AG04450 (cell line): ENCODE measurements at regions of chr3 and their contacts with region 1.

Region 1: DNA sequence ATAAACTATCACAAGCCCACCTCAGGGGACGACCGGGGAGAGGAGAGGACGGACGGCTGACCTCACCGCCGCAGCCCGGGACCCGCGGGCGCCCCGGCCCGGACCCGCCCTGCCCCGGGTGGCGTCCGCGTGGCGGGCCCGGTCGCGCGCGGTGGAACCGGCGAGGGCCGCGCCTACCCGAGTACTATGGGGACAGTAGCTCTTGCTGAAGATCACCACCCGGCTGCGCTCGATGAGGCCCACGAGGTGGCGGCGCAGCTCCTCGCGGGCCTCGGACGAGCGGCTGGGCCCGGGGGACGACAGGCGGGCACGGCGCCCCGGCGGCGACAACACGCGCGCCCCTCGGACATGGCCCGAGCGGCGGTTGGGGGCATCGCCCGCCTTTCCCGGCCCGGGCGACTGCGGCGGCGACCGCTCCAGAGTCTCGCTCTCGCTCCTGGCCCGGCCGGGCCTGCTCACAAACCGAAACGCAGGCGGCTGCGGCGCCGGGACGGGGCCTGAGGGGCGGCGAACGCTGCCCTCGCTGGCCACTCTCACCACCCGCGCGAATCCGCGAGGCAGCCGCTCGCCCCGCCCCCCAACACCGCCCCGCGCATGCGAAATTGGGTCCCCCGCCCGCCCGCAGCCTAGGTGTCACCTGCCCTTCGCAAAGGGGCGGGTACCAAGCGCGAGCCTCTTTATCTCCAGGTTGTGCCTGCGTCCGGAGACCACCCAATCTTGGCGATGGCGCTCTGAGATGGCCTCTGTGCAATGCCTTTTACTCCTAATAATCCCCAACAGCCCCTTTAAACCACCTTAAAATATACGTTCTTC is at the start of gene TXNRD3:
- DNase-seq: no peak
- H3K4me3 ChIP-seq: peak within 1 kb of the TSS; percentile 70
- H3K27ac ChIP-seq: no peak within 1 kb of the TSS
- H3K27me3 ChIP-seq: peaks cover 7% of the 10 kb centered on the region
- CTCF ChIP-seq: no peak
- polyA plus RNA-seq, gene TXNRD3: 7.4 and 10.1 TPM in 2 replicates

Region 2: DNA sequence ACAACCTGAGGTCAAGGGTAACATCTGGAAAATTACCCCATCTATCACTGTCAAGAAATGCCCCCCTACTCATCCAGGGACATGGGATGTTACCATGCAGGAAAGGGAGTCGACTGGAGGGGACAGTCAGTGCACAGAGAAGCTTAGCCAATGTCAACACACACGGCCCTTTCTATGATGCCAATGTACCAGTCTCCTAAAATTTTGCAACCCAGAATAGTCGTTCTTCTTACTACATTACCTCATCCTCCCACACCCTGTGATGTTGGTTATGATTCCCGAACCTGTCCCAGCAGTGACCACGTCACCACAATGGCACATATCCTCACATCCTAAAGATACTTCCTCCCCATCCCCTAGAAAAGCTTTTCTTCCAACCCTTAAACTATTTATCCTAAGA is 20.0 kb before region 1 on chr3:
- CTCF ChIA-PET with region 1: interaction called, 10 read pairs
- POLR2A ChIA-PET with region 1: no interaction called
- DNase-seq: no peak
- H3K4me3 ChIP-seq: no peak overlapping the region
- H3K27ac ChIP-seq: no peak overlapping the region
- H3K27me3 ChIP-seq: no peaks in the 10 kb centered on the region
- CTCF ChIP-seq: no peak

Region 3: GRCh38 chr3:126671521-126671920 is 16.7 kb after region 1 on chr3:
- CTCF ChIA-PET with region 1: no interaction called
- POLR2A ChIA-PET with region 1: no interaction called
- DNase-seq: no peak
- H3K4me3 ChIP-seq: no peak overlapping the region
- H3K27ac ChIP-seq: no peak overlapping the region
- H3K27me3 ChIP-seq: peaks cover 16% of the 10 kb centered on the region
- CTCF ChIP-seq: no peak